ENCODE measurements at regions of chr16 and their contacts with region 1.

Region 1: GRCh38 chr16:66406534-66407221 is 20.4 kb upstream of the BEAN1 start:
- DNase-seq: peak; percentile 91
- H3K4me3 Mint-ChIP-seq: peak overlapping the region; percentile 78
- H3K27ac Mint-ChIP-seq: peak overlapping the region; percentile 24
- H3K4me1 Mint-ChIP-seq: peaks cover 32% of the 10 kb centered on the region
- H3K27me3 Mint-ChIP-seq: peaks cover 35% of the 10 kb centered on the region

Region 2: GRCh38 chr16:66342294-66342900 is 64.3 kb before region 1 on chr16:
- CTCF ChIA-PET with region 1: no interaction called
- DNase-seq: peak; percentile 34
- H3K4me3 Mint-ChIP-seq: no peak overlapping the region
- H3K27ac Mint-ChIP-seq: no peak overlapping the region
- H3K4me1 Mint-ChIP-seq: no peaks in the 10 kb centered on the region
- H3K27me3 Mint-ChIP-seq: peaks cover 40% of the 10 kb centered on the region

Region 3: GRCh38 chr16:66471716-66472393 is 65.2 kb after region 1 on chr16:
- CTCF ChIA-PET with region 1: interaction called, 75 read pairs
- DNase-seq: no peak
- H3K4me3 Mint-ChIP-seq: no peak overlapping the region
- H3K27ac Mint-ChIP-seq: no peak overlapping the region
- H3K4me1 Mint-ChIP-seq: peaks cover 25% of the 10 kb centered on the region
- H3K27me3 Mint-ChIP-seq: peaks cover 56% of the 10 kb centered on the region

Region 4: GRCh38 chr16:66483689-66484481 is 77.2 kb after region 1 on chr16:
- CTCF ChIA-PET with region 1: interaction called, 75 read pairs
- DNase-seq: peak; percentile 84
- H3K4me3 Mint-ChIP-seq: no peak overlapping the region
- H3K27ac Mint-ChIP-seq: no peak overlapping the region
- H3K4me1 Mint-ChIP-seq: peaks cover 24% of the 10 kb centered on the region
- H3K27me3 Mint-ChIP-seq: peaks cover 21% of the 10 kb centered on the region

Region 5: DNA sequence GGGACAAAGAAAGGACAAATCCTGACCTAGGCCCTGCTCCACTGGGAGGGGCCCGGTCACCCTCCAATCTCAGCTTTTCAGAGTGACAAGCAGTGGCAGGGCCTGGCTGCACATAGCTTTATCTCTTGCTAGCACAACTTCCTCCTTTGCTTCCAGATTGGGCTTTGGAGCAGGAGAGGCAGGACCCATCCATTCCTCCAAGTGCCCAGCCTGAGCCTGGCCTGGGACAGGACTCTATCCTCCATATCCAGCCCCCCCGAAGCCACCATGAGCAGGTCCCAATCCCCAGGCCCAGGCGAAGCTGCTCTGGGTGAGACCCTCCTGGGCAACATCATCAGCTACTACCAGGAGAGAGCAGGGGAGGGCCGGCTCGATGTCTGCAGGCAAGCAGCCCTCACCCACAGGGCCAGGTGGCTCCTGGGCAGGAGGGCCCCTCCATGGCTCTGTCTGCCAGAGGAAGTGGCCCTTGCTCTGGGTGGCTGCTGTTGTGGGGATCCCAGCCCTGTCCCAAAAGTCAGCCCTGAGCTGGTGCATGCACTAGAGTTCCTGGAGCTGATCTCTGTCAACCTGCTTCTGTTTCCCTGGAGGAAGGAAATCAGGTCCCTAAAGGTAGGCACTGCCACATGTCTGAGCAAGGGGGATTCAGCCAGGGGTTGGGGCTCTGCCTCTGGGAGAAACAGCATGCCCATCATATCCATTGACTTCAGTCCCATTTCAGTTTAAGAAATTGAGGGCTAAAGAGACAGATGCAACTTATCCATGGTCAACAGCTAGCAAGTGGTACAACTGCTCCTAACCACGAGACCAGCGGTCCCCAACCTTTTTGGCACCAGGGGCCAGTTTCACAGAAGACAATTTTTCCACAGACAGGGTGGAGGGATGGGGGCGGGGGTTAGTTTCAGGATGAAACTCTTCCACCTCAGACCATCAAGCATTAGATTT is 84.4 kb after region 1 on chr16:
- CTCF ChIA-PET with region 1: interaction called, 61 read pairs
- DNase-seq: no peak
- H3K4me3 Mint-ChIP-seq: no peak overlapping the region
- H3K27ac Mint-ChIP-seq: no peak overlapping the region
- H3K4me1 Mint-ChIP-seq: no peaks in the 10 kb centered on the region
- H3K27me3 Mint-ChIP-seq: peaks cover 24% of the 10 kb centered on the region

Region 6: GRCh38 chr16:66515596-66516510 is 109.2 kb after region 1 on chr16:
- CTCF ChIA-PET with region 1: interaction called, 11 read pairs
- DNase-seq: peak; percentile 54
- H3K4me3 Mint-ChIP-seq: peak overlapping the region; percentile 52
- H3K27ac Mint-ChIP-seq: peak overlapping the region; percentile 91
- H3K4me1 Mint-ChIP-seq: peaks cover 66% of the 10 kb centered on the region
- H3K27me3 Mint-ChIP-seq: peaks cover 4% of the 10 kb centered on the region

Region 7: GRCh38 chr16:66562407-66562806 is 155.7 kb after region 1 on chr16:
- CTCF ChIA-PET with region 1: interaction called, 11 read pairs
- DNase-seq: no peak
- H3K4me3 Mint-ChIP-seq: no peak overlapping the region
- H3K27ac Mint-ChIP-seq: no peak overlapping the region
- H3K4me1 Mint-ChIP-seq: peaks cover 60% of the 10 kb centered on the region
- H3K27me3 Mint-ChIP-seq: no peaks in the 10 kb centered on the region

Region 8: DNA sequence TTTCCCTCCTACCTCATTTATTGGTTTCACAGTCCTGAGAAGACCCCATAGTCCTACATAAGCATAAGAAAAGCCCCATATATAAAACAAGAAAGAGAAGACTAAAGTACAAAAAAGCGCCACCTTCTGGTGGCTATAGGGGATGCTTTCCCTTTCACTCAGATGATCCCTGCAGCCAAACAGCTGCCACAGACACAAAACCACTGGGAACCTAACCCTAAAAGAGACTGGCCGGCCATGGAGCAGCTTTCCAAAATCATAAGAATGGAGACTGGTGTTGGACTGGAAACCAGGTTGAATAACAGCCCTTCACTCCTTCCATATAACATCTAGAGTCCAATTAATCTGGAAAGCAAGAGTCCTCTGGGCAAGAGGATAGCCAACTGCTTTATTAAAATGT is 333.3 kb after region 1 on chr16:
- CTCF ChIA-PET with region 1: interaction called, 12 read pairs
- DNase-seq: peak; percentile 58
- H3K4me3 Mint-ChIP-seq: no peak overlapping the region
- H3K27ac Mint-ChIP-seq: no peak overlapping the region
- H3K4me1 Mint-ChIP-seq: peaks cover 23% of the 10 kb centered on the region
- H3K27me3 Mint-ChIP-seq: no peaks in the 10 kb centered on the region

Measured in activated naive CD4-positive, alpha-beta T cell treated with anti-CD3 and anti-CD28 coated beads, Interleukin-2, amount 10 ng/mL, durations not matched to agents 7 days and 5 days (primary cell).